ENCODE measurements at regions of chr2 and their contacts with region 1.

Region 1: DNA sequence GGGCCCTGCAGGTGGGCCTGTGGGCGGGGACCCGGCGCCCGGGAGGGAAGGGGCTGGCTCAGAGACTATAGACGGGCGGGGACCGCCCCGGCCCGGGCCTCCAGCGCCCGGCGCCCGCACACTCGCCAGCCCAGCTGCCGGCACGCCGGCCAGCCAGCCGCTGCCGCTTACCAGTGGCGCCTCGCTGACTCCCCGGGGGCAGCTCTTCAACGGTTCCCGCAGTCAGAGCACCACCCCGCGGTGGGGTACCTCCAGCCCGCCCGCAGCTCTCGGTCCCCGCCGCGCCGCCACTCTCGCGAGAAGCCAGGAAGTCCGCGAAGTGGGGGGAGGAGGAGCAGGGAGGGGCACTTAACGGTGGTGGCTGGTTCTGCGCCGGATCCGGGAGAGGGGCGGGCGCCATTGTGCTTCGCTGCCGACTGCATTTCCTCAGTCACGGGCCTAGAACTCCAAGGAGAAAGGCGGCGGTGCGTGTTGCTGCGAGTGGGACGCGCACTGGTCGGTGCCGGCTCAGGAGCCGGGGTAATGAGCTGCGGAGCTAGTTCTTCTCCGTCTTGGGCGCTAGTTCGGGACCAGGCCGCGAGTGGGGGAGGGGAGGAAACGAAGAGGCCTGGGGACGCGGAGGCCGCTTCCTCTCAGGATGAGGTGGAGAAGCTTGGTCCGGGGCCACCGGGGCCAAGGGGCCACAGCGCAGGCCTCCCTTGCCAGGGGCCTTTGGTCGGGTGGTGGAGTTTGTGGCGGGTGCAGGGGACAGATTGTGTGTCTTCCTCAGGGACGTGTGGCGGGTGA is at the start of gene MARCHF7:
- DNase-seq: peak; percentile 97
- ATAC-seq: peak; percentile 96
- H3K4me3 Mint-ChIP-seq: peak within 1 kb of the TSS; percentile 100
- H3K27ac Mint-ChIP-seq: peak within 1 kb of the TSS; percentile 100
- H3K4me1 Mint-ChIP-seq: peaks cover 42% of the 10 kb centered on the region
- H3K27me3 Mint-ChIP-seq: no peaks in the 10 kb centered on the region
- total RNA-seq, gene MARCHF7: 75.3 to 75.6 TPM

Region 2: GRCh38 chr2:159286709-159287441 is 425.5 kb before region 1 on chr2:
- CTCF ChIA-PET with region 1: interaction called, 4 read pairs
- POLR2A ChIA-PET with region 1: interaction called, 14 read pairs
- DNase-seq: peak; percentile 97
- ATAC-seq: peak; percentile 99
- H3K4me3 Mint-ChIP-seq: peak overlapping the region; percentile 85
- H3K27ac Mint-ChIP-seq: peak overlapping the region; percentile 85
- H3K4me1 Mint-ChIP-seq: peaks cover 23% of the 10 kb centered on the region
- H3K27me3 Mint-ChIP-seq: no peaks in the 10 kb centered on the region

Region 3: DNA sequence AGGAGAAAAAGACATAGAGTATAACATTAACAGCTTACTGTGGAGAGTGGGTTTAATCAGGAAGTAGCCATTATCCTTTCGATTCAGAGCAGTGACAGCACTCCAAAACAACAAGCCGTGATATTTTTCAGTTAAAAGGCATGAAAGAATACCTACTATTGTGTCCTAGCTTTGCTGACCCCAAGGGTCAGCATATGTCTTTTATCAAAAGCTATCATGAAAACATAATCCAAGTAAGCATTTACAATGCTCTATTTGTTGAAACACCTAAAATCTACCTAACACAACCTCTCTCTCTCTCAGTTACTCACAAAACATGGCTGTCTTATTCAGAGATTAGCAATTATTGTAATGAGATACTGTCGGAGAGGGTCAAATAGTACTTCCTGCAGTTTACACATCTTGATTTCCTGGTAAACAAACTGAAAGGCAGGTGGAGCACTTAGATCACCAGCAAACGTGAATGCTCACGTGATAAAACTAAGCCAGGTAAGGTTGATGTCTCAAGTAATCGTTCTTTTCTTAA is 196.0 kb before region 1 on chr2:
- CTCF ChIA-PET with region 1: no interaction called
- POLR2A ChIA-PET with region 1: interaction called, 11 read pairs
- DNase-seq: peak; percentile 25
- ATAC-seq: peak; percentile 90
- H3K4me3 Mint-ChIP-seq: peak overlapping the region; percentile 74
- H3K27ac Mint-ChIP-seq: peak overlapping the region; percentile 87
- H3K4me1 Mint-ChIP-seq: peaks cover 14% of the 10 kb centered on the region
- H3K27me3 Mint-ChIP-seq: no peaks in the 10 kb centered on the region

Region 4: GRCh38 chr2:159557451-159558034 is 154.8 kb before region 1 on chr2:
- CTCF ChIA-PET with region 1: no interaction called
- POLR2A ChIA-PET with region 1: no interaction called
- DNase-seq: no peak
- ATAC-seq: no peak
- H3K4me3 Mint-ChIP-seq: no peak overlapping the region
- H3K27ac Mint-ChIP-seq: no peak overlapping the region
- H3K4me1 Mint-ChIP-seq: no peaks in the 10 kb centered on the region
- H3K27me3 Mint-ChIP-seq: no peaks in the 10 kb centered on the region

Region 5: GRCh38 chr2:159677654-159678053 is 34.7 kb before region 1 on chr2:
- CTCF ChIA-PET with region 1: no interaction called
- POLR2A ChIA-PET with region 1: no interaction called
- DNase-seq: no peak
- ATAC-seq: no peak
- H3K4me3 Mint-ChIP-seq: no peak overlapping the region
- H3K27ac Mint-ChIP-seq: no peak overlapping the region
- H3K4me1 Mint-ChIP-seq: no peaks in the 10 kb centered on the region
- H3K27me3 Mint-ChIP-seq: no peaks in the 10 kb centered on the region

Region 6: DNA sequence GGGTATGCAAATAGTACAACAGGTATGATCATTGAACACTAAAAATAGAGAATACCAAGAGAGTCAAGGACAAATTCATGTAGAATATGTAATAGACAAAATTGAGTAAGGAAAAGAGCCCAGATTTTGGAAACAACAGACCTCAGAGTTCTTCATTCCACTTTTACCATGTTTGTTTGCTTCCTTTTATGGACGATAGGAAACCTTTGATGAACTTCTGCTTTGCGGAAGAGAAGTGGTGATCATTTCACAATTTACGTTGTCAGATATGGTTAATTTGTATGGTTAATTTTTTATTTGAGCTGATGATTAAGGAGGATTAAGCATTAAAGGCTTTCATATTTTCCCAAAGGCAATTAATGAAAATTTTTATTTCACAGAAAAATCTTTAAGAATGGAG is 16.3 kb after region 1 on chr2:
- CTCF ChIA-PET with region 1: interaction called, 10 read pairs
- POLR2A ChIA-PET with region 1: interaction called, 9 read pairs
- DNase-seq: no peak
- ATAC-seq: no peak
- H3K4me3 Mint-ChIP-seq: no peak overlapping the region
- H3K27ac Mint-ChIP-seq: no peak overlapping the region
- H3K4me1 Mint-ChIP-seq: peaks cover 23% of the 10 kb centered on the region
- H3K27me3 Mint-ChIP-seq: no peaks in the 10 kb centered on the region

Measured in activated CD8-positive, alpha-beta T cell treated with anti-CD3 and anti-CD28 coated beads, Interleukin-2, amount 10 ng/mL, durations not matched to agents 7 days and 5 days (primary cell).